ENCODE measurements at regions of chr13 and their contacts with region 1.

Region 1: DNA sequence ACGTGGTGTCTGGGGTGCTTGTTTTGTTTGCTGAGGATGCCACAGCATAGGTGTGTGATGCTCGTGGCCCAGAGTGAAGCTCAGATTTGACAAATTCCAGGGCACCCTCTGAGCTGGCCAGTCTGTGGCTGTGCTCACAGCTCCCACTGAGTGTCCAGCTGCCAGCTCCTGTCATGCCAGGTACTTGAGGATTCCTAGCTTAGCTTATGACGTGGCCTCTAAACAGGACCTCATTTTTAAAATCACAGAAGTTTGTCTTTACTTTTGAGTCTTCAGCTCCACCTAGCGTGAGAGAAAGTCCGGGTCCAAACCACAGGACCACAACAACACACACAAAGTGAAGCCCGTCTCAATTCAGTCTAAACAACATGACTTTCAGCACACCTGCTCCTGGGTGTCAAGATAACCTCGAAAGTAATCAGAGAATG is 117.3 kb downstream of the RAB20 start:
- DNase-seq: peak in 1 of 3 donors; percentile 54
- ATAC-seq: peak; percentile 34 to 52
- H3K4me3 ChIP-seq: no peak overlapping the region
- H3K27ac ChIP-seq: no peak overlapping the region
- H3K4me1 ChIP-seq: no peaks in the 10 kb centered on the region
- H3K27me3 ChIP-seq: no peaks in the 10 kb centered on the region

Region 2: DNA sequence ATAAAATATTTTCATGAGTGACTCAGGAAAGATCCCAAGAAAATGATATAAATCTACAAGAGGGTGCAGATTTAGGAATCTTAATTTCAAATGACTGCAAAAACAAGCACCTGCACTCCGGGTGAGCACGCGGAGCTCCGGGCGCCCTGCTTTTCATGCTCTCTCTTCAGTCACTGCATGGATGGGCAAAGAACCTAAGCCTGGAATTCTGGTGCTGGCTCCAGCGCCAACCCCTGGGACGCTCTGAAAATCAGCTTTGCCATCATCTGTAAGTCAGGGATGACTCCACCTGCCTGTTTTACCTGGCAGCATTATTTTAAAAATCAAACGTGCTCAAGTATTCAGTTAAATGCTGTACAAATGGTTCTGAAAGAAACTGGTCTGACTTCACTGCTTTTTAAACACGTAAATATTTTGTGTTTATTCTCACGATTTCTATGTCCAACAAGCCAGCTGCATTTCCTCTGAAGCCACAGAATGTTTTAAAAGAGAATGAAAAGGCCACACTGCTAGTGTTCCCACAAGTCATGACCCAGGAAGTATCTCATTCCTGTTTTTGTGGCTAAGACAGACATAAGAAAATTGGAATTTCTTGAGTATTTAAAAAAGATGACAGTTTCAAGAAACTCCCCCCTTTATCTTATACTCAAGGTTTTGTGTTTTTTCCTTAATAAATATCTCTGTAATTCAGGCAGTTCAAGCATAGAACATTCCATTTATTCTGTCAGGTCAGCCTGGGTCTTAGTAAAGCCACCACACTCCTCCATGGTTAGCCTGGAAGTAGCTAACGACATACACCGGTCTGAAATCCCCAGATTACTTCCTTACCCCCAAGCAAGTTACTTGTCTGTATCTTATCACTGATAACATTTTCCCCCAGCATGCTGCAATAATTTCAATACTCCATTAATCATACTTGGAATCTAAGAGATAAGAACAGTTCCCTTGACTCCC is 218.4 kb before region 1 on chr13:
- intact Hi-C with region 1: loop called in 1 of 4 experiments (anchors 10 kb)
- DNase-seq: no peak
- ATAC-seq: no peak
- H3K4me3 ChIP-seq: no peak overlapping the region
- H3K27ac ChIP-seq: peak overlapping the region; percentile 53
- H3K4me1 ChIP-seq: peaks cover 2% of the 10 kb centered on the region
- H3K27me3 ChIP-seq: no peaks in the 10 kb centered on the region